Ascending aorta (tissue), 2 donors: ENCODE measurements at regions of chr7 and their contacts with region 1.

Region 1: GRCh38 chr7:4883374-4884144 is at the start of gene RADIL:
- DNase-seq: peak; percentile 69 to 95
- H3K4me3 ChIP-seq: peak within 1 kb of the TSS; percentile 66 to 80
- H3K27ac ChIP-seq: peak within 1 kb of the TSS; percentile 72 to 82
- H3K4me1 ChIP-seq: peaks cover 2 to 4% of the 10 kb centered on the region in 2 donors
- H3K27me3 ChIP-seq: no peaks in the 10 kb centered on the region
- CTCF ChIP-seq: peak; percentile 68 to 89 (median 86)
- total RNA-seq, gene RADIL: 42.4 TPM

Region 2: DNA sequence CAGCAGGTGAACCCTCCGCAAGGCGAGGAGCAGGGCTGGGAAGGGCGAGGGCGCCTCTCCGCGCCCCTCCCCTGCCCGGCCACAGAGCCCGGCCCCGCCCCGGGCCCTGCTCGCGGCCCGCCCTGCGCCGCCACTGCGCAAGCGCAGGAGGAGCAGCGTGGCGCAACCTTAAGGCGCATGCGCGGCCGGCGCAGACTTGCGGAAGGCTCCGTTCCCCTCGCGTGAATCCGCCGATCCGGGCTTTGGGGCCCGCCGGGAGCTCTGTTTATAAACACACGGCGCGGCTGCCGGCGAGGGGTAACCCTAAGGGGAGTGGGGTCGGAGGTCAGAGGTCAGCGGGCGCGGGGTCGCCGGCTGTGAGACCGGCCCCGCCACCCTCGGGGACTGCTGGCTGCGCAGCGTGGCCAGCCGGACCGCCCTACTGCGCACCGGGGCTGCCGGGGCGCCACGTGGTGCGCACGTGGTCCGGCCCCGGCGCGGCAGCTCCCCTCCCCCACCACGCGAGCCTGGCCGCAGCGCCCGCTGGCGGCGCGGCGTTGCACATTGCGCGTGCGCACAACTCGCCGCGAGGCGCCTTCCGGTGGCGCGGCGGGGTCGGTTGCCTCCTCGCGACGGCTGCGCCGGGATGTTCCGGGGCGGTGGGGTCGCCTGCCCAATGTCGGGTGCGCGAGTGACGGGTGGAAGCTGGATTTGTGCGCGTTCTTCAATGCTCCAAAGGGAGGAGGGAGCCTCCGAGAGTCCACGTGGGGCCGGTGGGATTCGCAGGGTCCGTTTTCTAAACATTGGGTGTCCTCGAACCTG is 241.7 kb before region 1 on chr7:
- intact Hi-C with region 1: loop called (anchors 2 kb)
- DNase-seq: peak; percentile 63 to 97
- H3K4me3 ChIP-seq: peak overlapping the region; percentile 67 to 76
- H3K27ac ChIP-seq: peak overlapping the region; percentile 87 to 94
- H3K4me1 ChIP-seq: peaks cover 0 to 4% of the 10 kb centered on the region in 2 donors
- H3K27me3 ChIP-seq: no peaks in the 10 kb centered on the region
- CTCF ChIP-seq: peak; percentile 15 to 90 (median 41)

Region 3: GRCh38 chr7:4744391-4745264 is 138.9 kb before region 1 on chr7:
- intact Hi-C with region 1: loop called (anchors 2 kb)
- DNase-seq: peak; percentile 90 to 99
- H3K4me3 ChIP-seq: peak overlapping the region; percentile 45 to 53
- H3K27ac ChIP-seq: peak overlapping the region; percentile 81 to 94
- H3K4me1 ChIP-seq: peaks cover 3 to 36% of the 10 kb centered on the region in 2 donors
- H3K27me3 ChIP-seq: no peaks in the 10 kb centered on the region
- CTCF ChIP-seq: no peak

Region 4: GRCh38 chr7:4797858-4798705 is 85.5 kb before region 1 on chr7:
- intact Hi-C with region 1: loop called (anchors 1 kb)
- DNase-seq: no peak
- H3K4me3 ChIP-seq: no peak overlapping the region
- H3K27ac ChIP-seq: no peak overlapping the region
- H3K4me1 ChIP-seq: peaks cover 0 to 3% of the 10 kb centered on the region in 2 donors
- H3K27me3 ChIP-seq: no peaks in the 10 kb centered on the region
- CTCF ChIP-seq: peak; percentile 74 to 97 (median 95)

Region 5: DNA sequence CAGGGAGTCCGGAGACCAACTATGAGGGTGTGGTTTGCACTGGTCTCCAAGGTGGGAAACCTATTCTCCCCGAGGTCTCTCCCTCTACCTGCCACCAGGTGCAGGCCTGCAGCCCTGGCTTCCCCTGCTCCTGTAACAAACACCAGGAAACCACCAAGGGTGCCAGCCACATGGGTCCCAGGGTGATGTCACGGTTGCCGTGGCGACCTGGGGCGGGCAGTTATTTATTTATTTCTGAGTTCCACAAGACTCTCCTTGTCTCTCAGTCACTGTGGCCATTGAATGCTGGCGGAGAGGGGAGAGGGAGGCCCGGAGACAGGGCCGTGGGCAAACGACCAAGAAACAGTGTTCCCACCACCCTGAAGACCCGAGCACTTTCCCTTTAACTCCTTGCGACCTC is 48.4 kb after region 1 on chr7:
- intact Hi-C with region 1: no loop called
- DNase-seq: no peak
- H3K4me3 ChIP-seq: no peak overlapping the region
- H3K27ac ChIP-seq: no peak overlapping the region
- H3K4me1 ChIP-seq: no peaks in the 10 kb centered on the region
- H3K27me3 ChIP-seq: no peaks in the 10 kb centered on the region
- CTCF ChIP-seq: no peak

Region 6: DNA sequence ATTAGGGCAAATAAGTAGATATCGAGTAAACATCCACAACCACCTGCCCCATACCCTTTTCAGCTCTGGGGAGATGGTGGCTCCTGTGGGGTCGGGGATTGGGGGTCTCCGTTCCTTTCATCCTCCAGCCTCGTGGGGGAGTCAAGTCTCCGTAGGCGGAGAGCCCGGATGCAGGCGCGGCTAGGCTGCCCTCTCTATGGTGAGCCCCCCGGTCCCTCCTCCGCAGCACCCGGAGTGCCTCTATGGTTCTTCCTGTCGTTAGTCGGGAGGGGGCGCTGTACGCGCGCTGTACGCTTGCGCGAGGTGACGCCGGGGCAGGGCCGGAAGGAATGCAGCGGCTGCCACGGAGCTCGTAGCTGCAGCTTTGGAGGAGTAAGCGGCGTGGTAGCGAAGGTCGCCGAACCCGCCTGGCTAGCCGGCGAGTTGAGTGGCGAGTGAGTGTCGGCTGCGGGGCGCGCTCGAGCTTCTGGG is 90.2 kb after region 1 on chr7:
- intact Hi-C with region 1: loop called (anchors 2 kb)
- DNase-seq: peak; percentile 39 to 92
- H3K4me3 ChIP-seq: peak overlapping the region; percentile 67 to 96
- H3K27ac ChIP-seq: peak overlapping the region; percentile 83 to 96
- H3K4me1 ChIP-seq: no peaks in the 10 kb centered on the region
- H3K27me3 ChIP-seq: no peaks in the 10 kb centered on the region
- CTCF ChIP-seq: peak; percentile 66 to 86 (median 78)